PC-9 (cell line): ENCODE measurements at regions of chr19 and their contacts with region 1.

Region 1: GRCh38 chr19:52492597-52493470 is 34.6 kb upstream of the ZNF808 start:
- DNase-seq: no peak
- H3K4me3 ChIP-seq: no peak overlapping the region
- H3K27ac ChIP-seq: no peak overlapping the region
- H3K4me1 ChIP-seq: no peaks in the 10 kb centered on the region
- H3K27me3 ChIP-seq: peaks cover 3% of the 10 kb centered on the region; the same call in 1 of the 2 replicates
- CTCF ChIP-seq: no peak

Region 2: DNA sequence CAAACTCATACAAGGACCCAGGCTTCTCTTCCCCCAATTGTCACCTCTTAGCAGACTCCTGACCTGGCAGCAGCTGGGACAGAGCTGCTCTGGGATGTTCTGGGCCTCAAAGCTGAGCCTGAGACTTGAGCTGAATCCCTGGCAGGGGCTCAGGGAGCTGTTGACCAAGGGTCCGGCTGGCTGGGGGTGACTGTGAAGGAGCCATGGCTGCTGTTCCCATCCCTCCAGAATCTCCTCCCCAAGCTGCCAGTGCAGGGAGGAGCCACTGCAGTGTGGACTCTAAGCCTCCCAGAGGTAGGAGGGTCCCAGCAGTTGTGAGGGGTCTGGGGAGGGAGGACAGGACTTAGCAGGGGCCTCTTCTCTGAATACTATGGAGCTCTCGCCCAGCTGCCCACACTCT is 963.5 kb before region 1 on chr19:
- CTCF ChIA-PET with region 1: no interaction called
- POLR2A ChIA-PET with region 1: interaction called, 22 read pairs
- intact Hi-C with region 1: no loop called
- DNase-seq: no peak
- H3K4me3 ChIP-seq: no peak overlapping the region
- H3K27ac ChIP-seq: no peak overlapping the region
- H3K4me1 ChIP-seq: no peaks in the 10 kb centered on the region
- H3K27me3 ChIP-seq: peaks cover 94% of the 10 kb centered on the region
- CTCF ChIP-seq: no peak

Region 3: DNA sequence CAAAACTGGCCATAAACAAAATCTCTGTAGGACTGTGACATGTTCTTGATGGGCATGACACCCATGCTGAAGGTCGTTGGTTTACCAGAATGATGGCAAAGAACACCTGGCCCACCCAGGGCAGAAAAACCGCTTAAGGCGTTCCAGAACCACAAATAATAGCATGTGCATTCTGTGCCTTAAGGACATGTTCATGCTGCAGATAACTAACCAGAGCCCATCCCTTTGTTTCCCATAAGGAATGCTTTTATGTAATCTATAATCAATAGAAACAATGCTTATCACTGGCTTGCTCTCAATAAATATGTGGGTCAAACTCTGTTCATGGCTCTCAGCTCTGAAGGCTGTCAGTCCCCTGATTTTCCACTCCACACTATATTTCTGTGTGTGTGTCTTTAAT is 50.7 kb before region 1 on chr19:
- CTCF ChIA-PET with region 1: no interaction called
- POLR2A ChIA-PET with region 1: no interaction called
- intact Hi-C with region 1: no loop called
- DNase-seq: no peak
- H3K4me3 ChIP-seq: no peak overlapping the region
- H3K27ac ChIP-seq: no peak overlapping the region
- H3K4me1 ChIP-seq: no peaks in the 10 kb centered on the region
- H3K27me3 ChIP-seq: peaks cover 5% of the 10 kb centered on the region
- CTCF ChIP-seq: no peak

Region 4: GRCh38 chr19:52453324-52454094 is 39.3 kb before region 1 on chr19 and contains the start of gene ZNF578:
- CTCF ChIA-PET with region 1: no interaction called
- POLR2A ChIA-PET with region 1: no interaction called
- intact Hi-C with region 1: no loop called
- DNase-seq: peak in 1 of 2 experiments; percentile 8
- H3K4me3 ChIP-seq: no peak within 1 kb of the TSS
- H3K27ac ChIP-seq: no peak within 1 kb of the TSS
- H3K4me1 ChIP-seq: no peaks in the 10 kb centered on the region
- H3K27me3 ChIP-seq: no peaks in the 10 kb centered on the region
- CTCF ChIP-seq: no peak
- total RNA-seq, gene ZNF578: not detected in 2 replicates

Region 5: GRCh38 chr19:52464798-52465470 is 27.9 kb before region 1 on chr19:
- CTCF ChIA-PET with region 1: no interaction called
- POLR2A ChIA-PET with region 1: no interaction called
- intact Hi-C with region 1: no loop called
- DNase-seq: peak in 1 of 2 experiments; percentile 22
- H3K4me3 ChIP-seq: no peak overlapping the region
- H3K27ac ChIP-seq: no peak overlapping the region
- H3K4me1 ChIP-seq: no peaks in the 10 kb centered on the region
- H3K27me3 ChIP-seq: no peaks in the 10 kb centered on the region
- CTCF ChIP-seq: peak; percentile 61

Region 6: GRCh38 chr19:52542984-52543664 is 50.3 kb after region 1 on chr19:
- CTCF ChIA-PET with region 1: no interaction called
- POLR2A ChIA-PET with region 1: no interaction called
- intact Hi-C with region 1: no loop called
- DNase-seq: no peak
- H3K4me3 ChIP-seq: no peak overlapping the region
- H3K27ac ChIP-seq: no peak overlapping the region
- H3K4me1 ChIP-seq: no peaks in the 10 kb centered on the region
- H3K27me3 ChIP-seq: no peaks in the 10 kb centered on the region
- CTCF ChIP-seq: no peak